HCT116 (cell line): ENCODE measurements at regions of chr10 and their contacts with region 1.

Region 1: GRCh38 chr10:127679642-127680255 is 57.2 kb upstream of the FOXI2 start:
- DNase-seq: peak; percentile 12
- ATAC-seq: peak; percentile 77
- H3K4me3 ChIP-seq: no peak overlapping the region
- H3K27ac ChIP-seq: no peak overlapping the region
- H3K4me1 ChIP-seq: no peaks in the 10 kb centered on the region
- H3K27me3 ChIP-seq: peaks cover 38% of the 10 kb centered on the region
- CTCF ChIP-seq: peak; percentile 27 to 74 (median 71); a peak in 5 of 6 replicates
- POLR2A ChIP-seq: no peak
- RAD21 ChIP-seq: peak; percentile 57

Region 2: DNA sequence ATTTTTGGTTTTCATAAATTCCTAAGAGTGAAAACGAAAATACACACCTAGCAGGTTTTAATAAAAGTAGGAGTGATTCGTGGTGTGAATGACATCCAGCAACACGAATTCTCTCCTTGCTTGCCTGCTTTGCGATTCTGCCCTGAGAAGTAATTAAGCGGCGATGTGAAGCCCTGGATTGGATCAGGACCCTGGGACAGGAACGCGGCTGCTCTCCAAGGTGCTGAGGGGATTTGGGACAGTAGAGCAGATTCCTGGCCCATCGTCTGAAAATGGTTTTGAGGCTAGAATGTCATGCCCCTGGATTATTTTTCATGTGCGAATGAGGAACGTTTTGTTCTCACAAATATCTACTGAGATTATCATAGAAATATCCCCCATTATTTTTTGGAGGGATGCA is 122.8 kb before region 1 on chr10:
- CTCF ChIA-PET with region 1: no interaction called
- POLR2A ChIA-PET with region 1: no interaction called
- RAD21 ChIA-PET with region 1: no interaction called
- intact Hi-C with region 1: no loop called
- DNase-seq: no peak
- ATAC-seq: no peak
- H3K4me3 ChIP-seq: no peak overlapping the region
- H3K27ac ChIP-seq: no peak overlapping the region
- H3K4me1 ChIP-seq: no peaks in the 10 kb centered on the region
- H3K27me3 ChIP-seq: peaks cover 32% of the 10 kb centered on the region
- CTCF ChIP-seq: no peak
- POLR2A ChIP-seq: no peak
- RAD21 ChIP-seq: no peak

Region 3: GRCh38 chr10:127694580-127695193 is 14.9 kb after region 1 on chr10:
- CTCF ChIA-PET with region 1: interaction called, 10 read pairs
- POLR2A ChIA-PET with region 1: no interaction called
- RAD21 ChIA-PET with region 1: no interaction called
- intact Hi-C with region 1: no loop called
- DNase-seq: peak; percentile 85
- ATAC-seq: peak; percentile 98
- H3K4me3 ChIP-seq: no peak overlapping the region
- H3K27ac ChIP-seq: no peak overlapping the region
- H3K4me1 ChIP-seq: no peaks in the 10 kb centered on the region
- H3K27me3 ChIP-seq: peaks cover 25% of the 10 kb centered on the region
- CTCF ChIP-seq: peak; percentile 66 to 100 (median 100)
- POLR2A ChIP-seq: no peak
- RAD21 ChIP-seq: peak; percentile 56